ENCODE measurements at regions of chr12 and their contacts with region 1.

Region 1: DNA sequence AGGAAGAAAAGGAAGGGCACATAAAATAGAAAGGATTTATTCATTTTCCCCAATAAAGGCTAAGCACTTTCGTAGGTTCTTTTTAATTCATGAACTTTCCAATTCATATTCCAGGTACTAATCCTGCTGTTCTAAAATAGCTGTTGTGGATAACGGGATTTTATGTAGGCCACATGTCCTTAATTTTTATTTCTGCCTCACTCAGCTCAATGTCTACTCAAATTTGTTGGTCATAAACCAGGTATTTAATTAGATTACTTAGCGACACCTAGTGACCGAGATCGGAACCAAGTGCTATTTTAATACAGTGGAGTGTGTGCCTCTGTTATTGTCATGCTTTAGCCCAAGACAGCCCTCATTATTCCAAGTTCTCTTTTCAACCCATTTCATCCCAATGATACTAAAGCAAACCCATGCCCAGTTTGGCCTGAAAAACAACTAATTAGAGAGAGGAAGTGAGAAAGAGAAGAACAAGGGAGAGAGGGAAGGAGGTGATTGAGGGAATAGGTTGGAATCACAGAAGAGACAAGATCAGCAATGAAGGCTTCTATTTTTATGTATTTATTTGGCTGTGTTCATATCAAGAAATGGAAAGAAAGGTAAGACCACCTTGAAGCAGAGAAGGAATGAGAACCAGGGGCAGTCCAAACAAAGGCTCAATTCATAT is 45.9 kb upstream of the IFNG-AS1 start:
- DNase-seq: no peak

Region 2: DNA sequence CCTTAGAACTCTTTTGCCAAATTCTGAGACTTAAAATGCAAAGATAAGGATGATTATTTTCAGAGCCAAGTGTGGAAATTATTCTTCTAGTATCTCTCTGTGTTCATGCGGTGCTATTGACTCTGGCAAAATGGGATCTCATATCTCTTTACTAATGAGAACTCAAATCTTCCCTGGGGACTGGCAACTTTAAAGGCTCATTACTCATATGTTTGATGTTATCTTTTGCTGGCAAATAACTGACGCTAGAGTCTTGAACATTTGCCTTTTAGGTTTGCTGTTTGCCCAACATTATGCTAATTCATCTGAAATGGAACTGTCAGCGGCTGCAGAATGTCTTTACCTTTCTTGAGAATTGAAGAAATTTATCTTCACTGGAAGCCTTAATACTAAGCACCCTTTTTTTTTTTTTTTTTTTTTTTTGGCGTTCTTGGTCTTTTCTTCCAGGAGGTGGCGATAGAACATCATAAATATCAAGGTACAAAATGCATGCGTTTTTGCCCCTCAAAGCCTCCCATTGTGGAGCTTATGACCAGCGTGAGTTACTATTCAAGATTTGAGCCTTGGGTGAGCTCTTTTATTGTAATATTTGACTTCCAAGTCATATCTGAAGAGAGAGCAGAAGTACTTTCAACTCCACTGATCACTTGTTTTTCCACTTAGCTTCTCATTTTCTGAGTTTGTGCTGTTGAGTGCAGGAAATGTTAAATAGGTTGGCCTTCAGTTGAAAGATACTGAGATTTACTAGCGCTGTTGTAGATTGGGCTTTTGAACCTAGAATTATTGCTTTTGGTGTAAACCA is 587.6 kb before region 1 on chr12:
- intact Hi-C with region 1: loop called (anchors 5 to 10 kb)
- DNase-seq: no peak

Region 3: GRCh38 chr12:67364228-67364627 is 579.1 kb before region 1 on chr12:
- intact Hi-C with region 1: loop called (anchors 5 to 10 kb)
- DNase-seq: no peak

Region 4: DNA sequence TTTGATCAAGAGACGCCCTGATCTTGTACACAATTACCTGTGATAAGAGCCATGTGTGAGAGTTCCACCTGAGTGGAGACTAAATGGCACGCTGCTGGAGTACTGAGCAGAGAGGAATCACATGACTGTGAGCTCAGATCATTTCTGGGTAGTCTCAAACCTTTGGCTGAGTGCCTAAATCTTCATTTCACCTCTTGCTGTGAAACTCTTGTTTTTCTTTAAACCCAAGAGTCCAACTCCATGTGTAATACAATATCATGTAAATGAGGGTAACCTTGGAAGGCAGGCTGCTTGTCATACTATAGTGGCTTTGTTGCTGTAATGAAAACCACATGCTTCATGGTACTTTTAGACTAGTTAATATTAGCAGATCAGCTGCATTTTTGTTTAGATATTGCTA is 517.3 kb before region 1 on chr12:
- intact Hi-C with region 1: loop called in 1 of 2 experiments (anchors 10 kb)
- DNase-seq: no peak

Region 5: GRCh38 chr12:67515679-67516340 is 427.5 kb before region 1 on chr12:
- intact Hi-C with region 1: loop called in 1 of 2 experiments (anchors 5 kb)
- DNase-seq: no peak

Region 6: GRCh38 chr12:68012712-68013111 is 69.4 kb after region 1 on chr12:
- intact Hi-C with region 1: no loop called
- DNase-seq: no peak

Measured in posterior vena cava (tissue), 2 donors.